OCI-LY7 (cell line): ENCODE measurements at regions of chr14 and their contacts with region 1.

Region 1: DNA sequence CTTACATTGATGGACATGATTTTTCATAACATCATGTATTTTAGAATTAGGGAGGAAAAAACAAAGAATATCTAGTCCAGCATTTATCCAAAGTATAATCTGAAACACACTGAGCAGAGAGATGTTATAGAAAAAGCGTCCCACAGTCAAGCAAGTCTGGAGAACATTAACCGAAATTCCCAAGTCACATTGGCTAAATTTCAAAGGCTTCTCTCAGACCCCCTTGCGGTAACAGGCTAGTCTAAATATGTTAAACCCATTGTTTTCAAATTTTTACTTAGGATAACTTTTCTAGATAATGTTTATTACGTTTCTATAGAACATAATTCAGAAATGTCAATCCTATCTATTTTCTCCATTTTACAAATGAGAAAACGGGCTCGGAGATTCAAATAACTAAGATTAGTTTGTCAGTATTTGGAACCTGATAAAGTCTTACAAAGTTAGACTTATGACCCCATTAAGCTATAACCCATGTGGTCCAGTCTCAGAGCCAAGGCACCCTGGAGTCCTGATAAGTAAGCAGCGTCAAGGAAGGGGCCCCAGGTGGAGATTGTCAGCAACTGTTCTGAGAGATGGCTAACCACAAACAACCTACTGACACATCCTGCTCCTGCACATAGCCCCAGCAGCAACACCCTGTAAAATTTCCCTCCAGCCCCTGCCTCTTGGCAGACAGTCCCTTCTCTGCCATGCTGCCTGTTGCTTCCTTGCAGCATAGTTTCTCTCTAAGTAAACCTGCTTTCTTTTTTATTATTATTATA is 220.6 kb upstream of the TMEM260 start:
- DNase-seq: no peak
- H3K4me3 ChIP-seq: no peak overlapping the region
- H3K27ac ChIP-seq: no peak overlapping the region
- H3K4me1 ChIP-seq: no peaks in the 10 kb centered on the region
- CTCF ChIP-seq: no peak

Region 2: DNA sequence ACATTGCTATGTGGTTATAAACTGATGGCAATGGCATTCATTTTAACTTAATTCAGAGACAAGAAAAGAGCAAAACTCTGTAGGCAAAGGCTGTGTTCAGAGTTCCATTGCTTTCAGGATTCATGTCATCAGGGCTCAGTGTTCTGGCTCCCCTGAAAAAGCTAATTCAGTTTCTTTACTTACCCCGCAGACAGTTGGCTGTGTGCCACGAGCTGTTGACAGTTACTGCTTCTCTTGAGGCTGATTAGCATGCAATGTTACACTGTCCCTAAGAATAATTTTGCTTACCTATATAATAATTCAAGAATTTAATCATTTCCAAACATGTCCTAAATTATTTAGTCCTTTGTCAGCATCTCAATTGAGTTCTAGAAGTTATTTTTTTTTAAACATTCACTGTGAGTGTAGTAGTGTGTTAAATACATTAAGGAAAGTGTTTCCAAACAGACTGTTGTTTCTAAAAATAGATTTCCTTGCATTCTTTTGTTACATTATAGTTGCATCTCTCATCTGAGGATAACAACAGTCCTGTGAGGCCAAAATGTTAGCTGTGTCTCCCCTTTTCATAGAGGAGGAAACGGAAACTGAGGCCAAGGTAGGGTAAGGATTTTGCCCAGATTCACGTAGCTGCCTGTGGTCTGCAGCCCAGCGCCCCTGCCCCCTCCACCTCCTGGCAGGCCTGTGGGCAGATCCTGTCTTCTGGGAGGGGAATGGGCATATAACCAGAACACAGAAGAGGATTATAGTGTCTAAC is 142.2 kb before region 1 on chr14:
- CTCF ChIA-PET with region 1: no interaction called
- POLR2A ChIA-PET with region 1: no interaction called
- intact Hi-C with region 1: no loop called
- DNase-seq: no peak
- H3K4me3 ChIP-seq: no peak overlapping the region
- H3K27ac ChIP-seq: no peak overlapping the region
- H3K4me1 ChIP-seq: peaks cover 4% of the 10 kb centered on the region
- CTCF ChIP-seq: no peak

Region 3: GRCh38 chr14:56300495-56300894 is 58.5 kb before region 1 on chr14:
- CTCF ChIA-PET with region 1: no interaction called
- POLR2A ChIA-PET with region 1: interaction called, 10 read pairs
- intact Hi-C with region 1: no loop called
- DNase-seq: no peak
- H3K4me3 ChIP-seq: no peak overlapping the region
- H3K27ac ChIP-seq: no peak overlapping the region
- H3K4me1 ChIP-seq: no peaks in the 10 kb centered on the region
- CTCF ChIP-seq: no peak

Region 4: GRCh38 chr14:56390859-56391258 is 31.8 kb after region 1 on chr14:
- CTCF ChIA-PET with region 1: no interaction called
- POLR2A ChIA-PET with region 1: no interaction called
- intact Hi-C with region 1: no loop called
- DNase-seq: no peak
- H3K4me3 ChIP-seq: no peak overlapping the region
- H3K27ac ChIP-seq: no peak overlapping the region
- H3K4me1 ChIP-seq: no peaks in the 10 kb centered on the region
- CTCF ChIP-seq: 0 out of 2 replicates have a peak, but pooled peaks have one; percentile 15